Right cardiac atrium (tissue), 5 donors: ENCODE measurements at regions of chr5 and their contacts with region 1.

Region 1: GRCh38 chr5:142754031-142754430 is 16.1 kb upstream of the ARHGAP26 start:
- DNase-seq: peak; percentile 61 to 88 (median 73)
- ATAC-seq: peak; percentile 53 to 81
- H3K4me3 ChIP-seq: no peak overlapping the region
- H3K27ac ChIP-seq: peak overlapping the region; percentile 81
- H3K4me1 ChIP-seq: peaks cover 21% of the 10 kb centered on the region
- H3K27me3 ChIP-seq: no peaks in the 10 kb centered on the region

Region 2: GRCh38 chr5:142290577-142291299 is 463.3 kb before region 1 on chr5:
- intact Hi-C with region 1: no loop called
- DNase-seq: peak in 1 of 3 donors; percentile 64
- ATAC-seq: no peak
- H3K4me3 ChIP-seq: no peak overlapping the region
- H3K27ac ChIP-seq: no peak overlapping the region
- H3K4me1 ChIP-seq: peaks cover 4% of the 10 kb centered on the region
- H3K27me3 ChIP-seq: no peaks in the 10 kb centered on the region

Region 3: GRCh38 chr5:142685418-142686209 is 68.4 kb before region 1 on chr5 and contains the start of gene FGF1:
- intact Hi-C with region 1: no loop called
- DNase-seq: peak; percentile 35 to 83 (median 75)
- ATAC-seq: peak; percentile 51 to 73
- H3K4me3 ChIP-seq: no peak within 1 kb of the TSS
- H3K27ac ChIP-seq: peak within 1 kb of the TSS; percentile 77
- H3K4me1 ChIP-seq: peaks cover 25% of the 10 kb centered on the region
- H3K27me3 ChIP-seq: no peaks in the 10 kb centered on the region
- total RNA-seq, gene FGF1: 23.1 to 39.2 (median 30.0) TPM

Region 4: DNA sequence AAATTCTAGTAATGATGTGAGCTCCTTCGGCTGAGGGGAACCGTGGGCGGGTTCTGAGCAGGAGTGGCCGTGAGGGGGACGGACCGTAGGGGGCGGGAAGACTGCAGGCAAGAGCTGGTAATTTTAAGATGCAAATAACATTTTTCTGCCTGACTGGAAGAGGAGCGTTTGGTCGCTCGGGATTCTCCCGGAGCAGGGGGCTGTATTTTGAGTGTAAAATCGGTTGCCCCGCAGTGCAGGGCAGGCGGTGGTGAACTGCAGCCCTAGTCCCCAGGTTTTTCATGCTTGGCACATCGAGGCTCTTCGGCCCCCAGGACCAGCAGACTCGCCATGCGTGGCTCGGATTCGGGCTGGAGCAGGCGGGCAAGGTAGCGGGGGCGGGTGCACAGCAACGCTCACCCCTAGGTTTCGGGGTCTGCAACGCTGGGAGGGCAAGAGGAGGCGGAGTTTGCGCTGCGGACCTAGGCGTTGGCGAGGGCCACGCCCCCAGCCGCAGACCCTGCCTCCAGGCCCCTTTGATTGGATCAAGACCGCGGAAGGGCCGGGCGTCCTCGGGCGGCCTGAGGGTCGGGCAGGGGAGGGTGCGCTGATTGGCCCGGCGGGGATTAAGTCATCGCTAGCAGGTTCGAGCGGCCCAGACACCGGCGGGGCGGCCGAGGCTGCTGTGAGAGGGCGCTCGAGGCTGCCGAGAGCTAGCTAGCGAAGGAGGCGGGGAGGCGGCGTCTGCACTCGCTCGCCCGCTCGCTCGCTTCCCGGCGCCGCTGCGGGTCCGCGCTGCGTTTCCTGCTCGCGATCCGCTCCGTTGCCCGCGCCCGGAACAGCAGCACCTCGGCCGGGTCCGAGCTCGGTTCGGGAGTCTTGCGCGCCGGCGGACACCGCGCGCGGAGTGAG is 16.0 kb after region 1 on chr5 and contains the start of gene ARHGAP26:
- intact Hi-C with region 1: loop called in 1 of 4 experiments (anchors 2 kb)
- DNase-seq: peak; percentile 98 to 99 (median 99)
- ATAC-seq: peak; percentile 98
- H3K4me3 ChIP-seq: peak within 1 kb of the TSS; percentile 73
- H3K27ac ChIP-seq: peak within 1 kb of the TSS; percentile 91
- H3K4me1 ChIP-seq: no peaks in the 10 kb centered on the region
- H3K27me3 ChIP-seq: no peaks in the 10 kb centered on the region
- total RNA-seq, gene ARHGAP26: 44.4 to 56.9 (median 47.8) TPM

Region 5: DNA sequence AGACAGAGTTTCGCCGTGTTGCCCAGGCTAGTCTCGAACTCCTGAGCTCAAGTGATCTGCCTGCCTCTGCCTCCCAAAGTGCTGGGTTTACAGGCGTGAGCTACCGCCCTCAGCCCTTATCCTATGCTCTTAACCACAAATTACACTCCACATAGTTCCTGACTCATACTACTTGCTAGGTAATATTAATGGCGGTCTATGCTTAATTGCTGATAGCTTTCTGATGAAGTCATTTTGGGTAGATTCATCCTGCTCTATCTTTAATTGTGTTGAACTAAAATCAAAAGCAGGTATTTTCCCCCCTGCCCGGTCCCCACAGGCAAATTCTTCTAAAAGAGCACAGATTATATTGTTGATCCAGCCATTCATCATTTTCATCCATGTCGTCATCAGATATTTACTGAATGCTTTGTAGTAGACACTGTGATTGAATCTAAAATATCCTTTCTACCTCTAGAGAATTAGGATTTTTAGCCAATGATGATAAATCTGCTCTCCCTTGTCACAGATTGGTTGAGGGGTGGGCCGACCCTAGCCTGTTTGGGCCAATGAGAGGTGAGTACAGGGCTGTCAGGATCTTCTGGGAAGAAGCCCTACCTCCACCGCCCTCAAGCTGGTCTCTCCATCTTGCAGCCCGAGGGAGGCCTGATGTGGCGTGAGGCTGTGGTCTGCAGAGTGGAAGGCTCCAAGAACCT is 504.7 kb after region 1 on chr5:
- intact Hi-C with region 1: no loop called
- DNase-seq: no peak
- ATAC-seq: no peak
- H3K4me3 ChIP-seq: no peak overlapping the region
- H3K27ac ChIP-seq: no peak overlapping the region
- H3K4me1 ChIP-seq: no peaks in the 10 kb centered on the region
- H3K27me3 ChIP-seq: no peaks in the 10 kb centered on the region